GM12878 (cell line): ENCODE measurements at regions of chr11 and their contacts with region 1.

Region 1: DNA sequence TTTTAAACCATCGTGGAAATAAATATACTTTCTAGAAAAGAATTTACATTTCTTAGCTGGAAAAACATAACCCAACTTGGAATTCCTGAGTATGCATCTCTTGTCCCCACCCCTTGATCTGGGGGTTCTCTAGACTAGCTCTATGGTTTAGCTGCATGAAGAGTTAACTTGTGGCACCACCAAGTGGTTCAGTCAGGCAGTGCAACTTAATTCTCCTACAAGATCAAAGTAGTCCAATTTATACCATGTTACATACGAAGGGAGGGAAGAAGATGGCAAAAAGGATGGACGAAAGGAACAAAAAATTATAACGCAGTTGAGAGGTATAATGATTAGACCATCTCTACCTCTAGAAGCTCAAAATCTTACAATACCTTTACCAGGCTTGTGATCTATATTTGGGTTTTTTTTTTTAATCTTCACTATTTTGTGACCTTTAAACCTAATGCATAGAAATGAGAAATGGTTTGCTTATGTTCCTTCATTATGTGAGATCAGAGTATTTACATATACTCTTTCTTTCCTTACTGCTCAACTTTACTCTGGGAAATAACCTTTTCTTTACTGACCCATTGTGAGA is 28.5 kb upstream of the ALKBH3 start:
- DNase-seq: peak; percentile 27
- ATAC-seq: peak; percentile 95
- H3K4me3 ChIP-seq: no peak overlapping the region
- H3K27ac ChIP-seq: no peak overlapping the region
- H3K4me1 ChIP-seq: no peaks in the 10 kb centered on the region
- H3K27me3 ChIP-seq: no peaks in the 10 kb centered on the region
- CTCF ChIP-seq: peak; percentile 79 to 92 (median 88); a peak in 5 of 6 replicates
- EP300 ChIP-seq: no peak
- POLR2A ChIP-seq: no peak
- RAD21 ChIP-seq: peak; percentile 94

Region 2: GRCh38 chr11:43467958-43468357 is 384.2 kb before region 1 on chr11:
- CTCF ChIA-PET with region 1: no interaction called
- POLR2A ChIA-PET with region 1: no interaction called
- RAD21 ChIA-PET with region 1: no interaction called
- SMC1A ChIA-PET with region 1: no interaction called
- in situ Hi-C with region 1: no loop called
- intact Hi-C with region 1: no loop called
- DNase-seq: no peak
- ATAC-seq: no peak
- H3K4me3 ChIP-seq: no peak overlapping the region
- H3K27ac ChIP-seq: no peak overlapping the region
- H3K4me1 ChIP-seq: no peaks in the 10 kb centered on the region
- H3K27me3 ChIP-seq: no peaks in the 10 kb centered on the region
- CTCF ChIP-seq: no peak
- EP300 ChIP-seq: no peak
- POLR2A ChIP-seq: no peak
- RAD21 ChIP-seq: no peak

Region 3: DNA sequence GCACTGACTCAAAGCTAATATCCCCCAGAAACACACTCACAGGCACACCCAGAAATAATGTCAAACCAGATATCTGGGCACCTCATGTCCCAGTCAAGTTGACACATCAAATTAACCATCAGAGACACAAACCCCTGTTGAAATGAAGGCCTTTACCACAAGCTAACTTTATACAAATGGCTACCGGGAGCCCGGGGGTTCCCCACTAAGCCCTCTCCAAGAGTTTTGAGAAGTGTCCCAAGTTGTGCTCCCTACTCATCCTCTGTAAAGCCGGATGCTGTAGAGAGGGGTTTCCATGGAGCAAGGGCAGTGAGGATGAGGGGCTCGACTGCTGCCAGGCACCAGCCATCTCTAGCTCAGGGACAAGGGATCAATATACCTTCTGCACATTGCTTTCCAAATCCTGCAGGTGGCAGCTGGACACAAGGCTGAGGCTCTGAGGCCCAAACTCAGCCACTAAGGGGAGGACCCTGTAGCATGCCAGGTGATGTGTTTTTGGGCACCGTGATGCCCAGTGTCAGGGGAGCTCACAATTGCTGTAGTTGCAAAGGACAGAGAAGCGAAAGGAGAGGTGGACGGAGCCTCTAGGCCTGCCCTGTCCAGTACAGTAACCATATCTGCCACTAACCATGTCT is 347.7 kb before region 1 on chr11:
- CTCF ChIA-PET with region 1: interaction called, 21 read pairs
- POLR2A ChIA-PET with region 1: no interaction called
- RAD21 ChIA-PET with region 1: interaction called, 11 read pairs
- SMC1A ChIA-PET with region 1: interaction called, 8 read pairs
- in situ Hi-C with region 1: no loop called
- intact Hi-C with region 1: loop called (anchors 1 kb)
- DNase-seq: no peak
- ATAC-seq: peak; percentile 82
- H3K4me3 ChIP-seq: no peak overlapping the region
- H3K27ac ChIP-seq: no peak overlapping the region
- H3K4me1 ChIP-seq: no peaks in the 10 kb centered on the region
- H3K27me3 ChIP-seq: no peaks in the 10 kb centered on the region
- CTCF ChIP-seq: peak; percentile 24 to 54 (median 31); a peak in 4 of 6 replicates
- EP300 ChIP-seq: no peak
- POLR2A ChIP-seq: no peak
- RAD21 ChIP-seq: peak; percentile 68

Region 4: DNA sequence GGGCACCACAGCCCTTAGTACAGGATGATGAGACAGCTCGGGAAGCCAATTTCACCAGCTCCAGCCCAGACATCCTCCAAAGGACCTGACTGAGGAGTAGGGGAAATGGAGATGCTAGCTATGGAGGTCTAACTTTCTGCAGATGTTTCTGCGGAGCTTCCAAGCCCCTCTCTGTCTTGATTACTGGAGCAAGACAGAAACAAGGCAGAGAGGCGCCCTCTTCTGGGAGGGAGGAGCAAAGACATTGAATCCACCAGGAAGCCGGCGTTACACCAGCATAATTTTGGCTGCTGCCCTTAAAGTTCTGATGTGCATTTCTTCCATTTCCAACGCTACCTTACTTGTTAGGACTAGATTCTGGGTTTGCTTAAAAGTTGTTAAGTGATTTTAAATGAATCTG is 278.9 kb before region 1 on chr11:
- CTCF ChIA-PET with region 1: interaction called, 31 read pairs
- POLR2A ChIA-PET with region 1: no interaction called
- RAD21 ChIA-PET with region 1: interaction called, 15 read pairs
- SMC1A ChIA-PET with region 1: interaction called, 9 read pairs
- in situ Hi-C with region 1: no loop called
- intact Hi-C with region 1: loop called (anchors 5 kb)
- DNase-seq: no peak
- ATAC-seq: peak; percentile 74
- H3K4me3 ChIP-seq: no peak overlapping the region
- H3K27ac ChIP-seq: no peak overlapping the region
- H3K4me1 ChIP-seq: no peaks in the 10 kb centered on the region
- H3K27me3 ChIP-seq: peaks cover 16 to 28% of the 10 kb centered on the region in 2 experiments
- CTCF ChIP-seq: peak; percentile 50 to 65 (median 57)
- EP300 ChIP-seq: no peak
- POLR2A ChIP-seq: no peak
- RAD21 ChIP-seq: peak; percentile 46

Region 5: GRCh38 chr11:43825217-43825816 is 26.8 kb before region 1 on chr11:
- CTCF ChIA-PET with region 1: interaction called, 45 read pairs
- POLR2A ChIA-PET with region 1: no interaction called
- RAD21 ChIA-PET with region 1: interaction called, 12 read pairs
- SMC1A ChIA-PET with region 1: interaction called, 17 read pairs
- in situ Hi-C with region 1: no loop called
- intact Hi-C with region 1: no loop called
- DNase-seq: no peak
- ATAC-seq: no peak
- H3K4me3 ChIP-seq: no peak overlapping the region
- H3K27ac ChIP-seq: no peak overlapping the region
- H3K4me1 ChIP-seq: no peaks in the 10 kb centered on the region
- H3K27me3 ChIP-seq: no peaks in the 10 kb centered on the region
- CTCF ChIP-seq: peak; percentile 36 to 57 (median 41)
- EP300 ChIP-seq: no peak
- POLR2A ChIP-seq: no peak
- RAD21 ChIP-seq: no peak

Region 6: DNA sequence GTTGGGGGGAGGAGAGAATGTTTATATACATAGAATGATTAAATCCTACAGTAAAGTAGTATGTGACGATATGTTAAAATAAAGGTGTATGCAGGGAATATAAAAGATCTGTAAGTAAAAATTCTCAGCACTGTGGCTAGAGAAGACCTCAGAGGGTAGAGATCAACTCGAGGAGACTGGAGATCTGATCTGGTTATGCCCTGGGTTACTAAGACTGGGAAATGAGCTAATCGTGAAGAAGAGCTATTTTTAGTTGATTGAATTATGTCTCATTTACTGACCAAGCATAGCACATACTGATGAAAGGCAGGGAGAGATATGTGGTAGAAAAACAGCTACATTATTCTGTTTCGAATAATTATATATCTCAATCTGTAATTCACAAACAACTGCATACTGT is 14.3 kb before region 1 on chr11:
- CTCF ChIA-PET with region 1: interaction called, 29 read pairs
- POLR2A ChIA-PET with region 1: interaction called, 3 read pairs
- RAD21 ChIA-PET with region 1: interaction called, 8 read pairs
- SMC1A ChIA-PET with region 1: interaction called, 15 read pairs
- in situ Hi-C with region 1: no loop called
- intact Hi-C with region 1: no loop called
- DNase-seq: no peak
- ATAC-seq: peak; percentile 76
- H3K4me3 ChIP-seq: no peak overlapping the region
- H3K27ac ChIP-seq: no peak overlapping the region
- H3K4me1 ChIP-seq: no peaks in the 10 kb centered on the region
- H3K27me3 ChIP-seq: no peaks in the 10 kb centered on the region
- CTCF ChIP-seq: no peak
- EP300 ChIP-seq: no peak
- POLR2A ChIP-seq: no peak
- RAD21 ChIP-seq: no peak

Region 7: GRCh38 chr11:43880640-43881159 is 28.6 kb after region 1 on chr11 and contains the start of gene ALKBH3:
- CTCF ChIA-PET with region 1: interaction called, 12 read pairs
- POLR2A ChIA-PET with region 1: no interaction called
- RAD21 ChIA-PET with region 1: interaction called, 3 read pairs
- SMC1A ChIA-PET with region 1: no interaction called
- in situ Hi-C with region 1: no loop called
- intact Hi-C with region 1: no loop called
- DNase-seq: peak; percentile 65
- ATAC-seq: peak; percentile 100
- H3K4me3 ChIP-seq: peak within 1 kb of the TSS; percentile 83
- H3K27ac ChIP-seq: peak within 1 kb of the TSS; percentile 47; the same call in 1 of the 2 replicates
- H3K4me1 ChIP-seq: peaks cover 4% of the 10 kb centered on the region
- H3K27me3 ChIP-seq: no peaks in the 10 kb centered on the region
- CTCF ChIP-seq: no peak
- EP300 ChIP-seq: no peak
- POLR2A ChIP-seq: peak; percentile 90
- RAD21 ChIP-seq: no peak
- polyA plus RNA-seq, gene ALKBH3: 22.1 to 36.9 TPM